ENCODE measurements at regions of chr11 and their contacts with region 1.

Region 1: DNA sequence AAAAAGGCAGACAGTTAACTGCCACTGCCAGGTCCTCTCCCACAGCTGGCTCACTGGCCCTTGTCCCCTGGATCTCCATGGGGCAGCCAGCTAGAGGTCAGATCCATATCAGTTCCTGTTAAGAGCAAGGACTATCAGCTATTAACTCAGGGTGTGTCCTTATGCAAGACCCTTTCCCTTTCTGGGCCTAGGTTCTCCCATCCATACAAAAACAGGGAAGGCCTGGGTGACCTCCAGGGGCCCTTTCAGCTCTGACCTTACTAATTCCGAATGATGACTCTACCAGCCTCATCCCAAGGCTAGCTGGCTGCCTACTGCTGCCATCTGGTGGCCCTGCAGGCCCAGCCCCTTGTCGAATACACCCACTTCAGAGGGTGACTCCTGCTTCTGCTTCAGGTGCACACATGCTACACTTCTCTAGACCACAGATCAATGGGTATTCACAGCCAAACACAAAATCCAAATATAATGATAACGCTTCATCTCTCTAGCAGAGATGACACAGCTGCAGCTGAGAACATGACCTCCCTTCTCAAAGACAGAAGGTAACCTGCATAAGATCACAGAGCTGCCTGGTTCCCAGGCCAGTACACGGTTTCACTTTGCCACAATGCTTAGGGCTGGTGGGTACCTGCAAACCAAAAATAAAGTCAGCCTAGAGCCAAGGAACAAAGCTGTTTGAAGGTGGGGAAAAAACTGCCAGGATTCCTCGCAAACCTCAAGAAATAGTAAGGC is 34.1 kb downstream of the SERGEF start:
- DNase-seq: peak; percentile 62
- ATAC-seq: peak; percentile 72

Region 2: DNA sequence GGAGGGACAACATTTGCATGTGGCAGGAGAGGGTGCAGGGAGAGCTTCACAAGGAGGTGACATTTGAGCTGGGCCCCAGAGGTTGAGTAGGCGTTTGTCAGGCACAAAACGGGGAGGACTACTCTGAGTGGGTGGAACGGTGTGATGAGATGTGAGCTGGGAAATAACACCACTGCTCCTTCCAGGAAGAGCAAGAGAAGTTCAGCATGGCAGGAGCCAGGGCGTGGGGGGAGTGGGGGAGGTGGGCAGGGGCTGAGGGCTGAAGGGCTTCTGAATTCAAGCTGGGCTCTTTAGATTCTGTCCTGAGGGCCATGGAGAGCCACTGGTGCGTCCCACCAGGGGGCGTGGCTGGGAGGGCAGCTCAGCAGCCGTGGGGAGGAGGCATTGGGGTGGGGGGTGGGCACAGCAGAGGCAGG is 377.5 kb before region 1 on chr11:
- intact Hi-C with region 1: loop called (anchors 5 kb)
- DNase-seq: peak; percentile 12
- ATAC-seq: no peak

Region 3: GRCh38 chr11:17730608-17731462 is 247.9 kb before region 1 on chr11:
- intact Hi-C with region 1: loop called (anchors 2 kb)
- DNase-seq: peak; percentile 84
- ATAC-seq: peak; percentile 86

Region 4: DNA sequence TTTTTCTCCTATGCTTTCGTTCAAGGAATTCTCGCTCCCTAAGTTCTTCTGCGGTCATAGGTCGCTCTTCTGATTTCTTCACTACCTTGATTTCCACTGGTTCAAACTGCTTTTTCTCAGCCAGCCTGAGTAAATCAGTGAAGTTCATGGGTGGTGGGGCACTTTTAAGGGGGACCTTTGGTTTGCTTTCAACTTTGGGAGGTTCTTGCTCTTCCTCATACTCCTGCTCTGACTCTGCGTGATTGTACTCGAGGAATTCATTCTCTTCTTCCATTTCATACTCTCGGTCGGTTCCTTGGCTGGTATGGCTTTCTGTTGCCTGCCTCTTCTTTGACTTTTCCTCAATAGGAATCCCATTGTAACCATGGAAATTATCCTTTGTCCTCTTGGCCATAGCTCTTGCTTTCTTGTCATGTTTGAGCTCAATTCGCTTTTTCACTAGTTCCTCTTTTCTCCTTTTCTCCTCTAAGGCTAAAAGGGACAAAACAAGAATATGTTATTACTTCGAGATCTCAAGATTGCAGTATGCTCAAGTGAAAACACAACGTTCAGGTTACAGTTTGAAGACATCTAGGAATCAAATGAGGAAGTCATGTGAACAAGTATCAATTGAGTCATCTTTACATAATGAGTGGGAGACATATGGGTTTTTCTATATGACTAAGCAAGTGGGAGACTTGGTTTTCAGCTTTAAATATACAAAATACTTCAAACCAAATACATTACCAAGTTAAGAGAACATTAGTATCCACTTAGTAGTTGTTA is 637.1 kb after region 1 on chr11:
- intact Hi-C with region 1: no loop called
- DNase-seq: no peak
- ATAC-seq: no peak